ENCODE measurements at regions of chr17 and their contacts with region 1.

Region 1: DNA sequence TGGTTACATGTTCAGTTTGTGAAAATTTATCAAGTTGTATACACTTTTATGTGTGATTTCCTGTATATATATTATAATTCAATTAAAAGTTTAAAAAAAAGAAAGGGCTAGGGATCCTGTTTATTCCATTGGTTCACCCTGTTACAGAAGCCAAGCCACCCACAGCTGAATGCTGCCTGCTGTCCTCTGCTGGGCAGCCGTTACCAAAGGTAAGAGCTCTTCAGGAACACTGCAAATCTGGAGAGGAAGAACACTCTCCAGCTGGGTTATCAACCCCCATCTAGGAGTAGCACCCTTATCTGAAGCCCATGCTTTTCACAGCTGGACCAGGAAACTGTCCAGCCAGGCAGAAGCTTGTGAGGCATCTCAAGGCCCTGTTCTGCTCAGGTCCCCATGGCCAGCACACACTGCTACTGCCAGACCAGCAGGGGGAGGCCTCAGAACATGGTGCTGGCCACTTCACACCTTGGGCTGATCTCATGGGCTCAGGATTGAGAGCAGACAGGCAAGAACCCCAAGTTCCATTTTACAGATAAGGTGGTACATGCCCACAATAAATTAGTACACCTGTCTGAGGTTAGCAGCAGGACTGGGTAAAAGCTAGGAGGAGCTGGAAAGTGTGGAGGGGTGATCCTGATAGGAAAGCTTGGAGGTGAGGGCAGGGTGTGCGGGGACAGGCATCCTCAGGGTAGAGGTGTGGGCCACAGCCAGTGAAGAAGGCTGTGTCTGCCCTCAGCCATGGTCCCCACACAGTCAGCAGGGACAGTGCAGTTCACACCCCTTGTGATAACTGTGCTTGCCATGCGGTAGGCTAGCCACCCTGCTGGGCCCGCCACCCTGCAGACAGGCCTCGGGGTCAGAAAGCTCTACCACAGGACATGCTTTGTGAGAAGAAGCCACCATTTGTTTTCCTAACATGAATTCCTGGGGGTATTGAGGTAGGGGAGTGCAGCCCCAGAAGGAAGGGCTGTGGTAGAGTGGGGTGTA is 54.3 kb upstream of the SREBF1 start:
- DNase-seq: no peak
- H3K4me3 ChIP-seq: no peak overlapping the region
- H3K27ac ChIP-seq: no peak overlapping the region
- H3K4me1 ChIP-seq: peaks cover 11 to 30% (median 11%) of the 10 kb centered on the region in 3 donors
- H3K27me3 ChIP-seq: no peaks in the 10 kb centered on the region
- CTCF ChIP-seq: peak in 5 of 6 experiments; percentile 42 to 74 (median 58)
- POLR2A ChIP-seq: no peak

Region 2: GRCh38 chr17:17752089-17752820 is 138.8 kb before region 1 on chr17:
- intact Hi-C with region 1: no loop called
- DNase-seq: peak; percentile 88
- H3K4me3 ChIP-seq: peak overlapping the region; percentile 24 to 69 (median 52)
- H3K27ac ChIP-seq: peak overlapping the region; percentile 83 to 93 (median 91)
- H3K4me1 ChIP-seq: peaks cover 29 to 70% (median 42%) of the 10 kb centered on the region in 3 donors
- H3K27me3 ChIP-seq: no peaks in the 10 kb centered on the region
- CTCF ChIP-seq: peak in 4 of 6 experiments; percentile 27 to 41 (median 34)
- POLR2A ChIP-seq: peak in 2 of 4 donors; percentile 17 to 51

Region 3: DNA sequence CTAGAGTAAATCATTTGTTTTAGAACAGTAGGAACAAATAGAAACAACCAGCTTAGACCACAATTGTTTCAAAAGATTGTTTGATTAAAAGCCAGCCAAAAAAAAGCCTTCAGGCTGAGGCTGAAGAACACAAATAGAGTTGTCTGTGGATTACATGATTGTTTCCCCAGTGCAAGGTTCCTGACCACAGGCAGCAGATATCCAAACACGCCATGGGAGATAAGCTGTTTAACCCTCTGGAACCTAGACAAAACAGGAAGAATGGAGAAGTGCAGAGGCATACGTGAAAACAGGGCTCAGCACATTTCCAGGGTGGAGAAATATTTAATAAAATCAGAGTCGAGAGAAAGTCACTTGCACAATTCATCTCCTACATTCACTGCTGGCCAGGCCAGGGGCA is 126.9 kb after region 1 on chr17:
- intact Hi-C with region 1: loop called (anchors 10 kb)
- DNase-seq: no peak
- H3K4me3 ChIP-seq: no peak overlapping the region
- H3K27ac ChIP-seq: no peak overlapping the region
- H3K4me1 ChIP-seq: peaks cover 0 to 10% (median 0%) of the 10 kb centered on the region in 3 donors
- H3K27me3 ChIP-seq: no peaks in the 10 kb centered on the region
- CTCF ChIP-seq: no peak
- POLR2A ChIP-seq: no peak